Mammary epithelial cell (primary cell): ENCODE measurements at regions of chr2 and their contacts with region 1.

Region 1: GRCh38 chr2:108583903-108584520 is 49.7 kb downstream of the LIMS1 start:
- DNase-seq: peak; percentile 66
- H3K4me3 ChIP-seq: no peak overlapping the region
- H3K27ac ChIP-seq: no peak overlapping the region
- H3K4me1 ChIP-seq: peaks cover 30% of the 10 kb centered on the region
- H3K27me3 ChIP-seq: no peaks in the 10 kb centered on the region
- CTCF ChIP-seq: peak; percentile 69 to 82

Region 2: DNA sequence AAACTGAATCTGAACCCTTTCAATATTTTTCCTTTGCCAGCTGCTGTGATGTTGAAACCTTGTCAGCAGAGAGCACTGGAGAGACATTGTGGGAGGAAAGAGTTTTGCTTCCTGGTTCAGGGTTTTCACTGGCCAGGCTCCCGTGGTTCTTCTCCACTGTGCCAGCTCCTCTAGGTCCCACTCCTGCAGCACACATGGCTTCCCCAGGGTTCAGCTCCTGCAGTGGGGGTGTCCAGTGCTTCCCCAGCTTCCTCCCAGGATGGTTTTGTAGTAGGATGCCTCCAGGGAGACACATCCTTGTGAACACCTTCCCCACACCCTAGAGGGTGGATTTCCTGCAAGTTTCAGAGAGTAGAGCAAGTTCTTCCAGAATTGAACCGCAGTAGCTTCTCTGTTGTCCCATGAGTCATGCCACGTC is 368.2 kb before region 1 on chr2:
- CTCF ChIA-PET with region 1: no interaction called
- dilution Hi-C with region 1: no loop called
- in situ Hi-C with region 1: no loop called
- intact Hi-C with region 1: loop called (anchors 2 kb)
- DNase-seq: peak; percentile 64
- H3K4me3 ChIP-seq: no peak overlapping the region
- H3K27ac ChIP-seq: no peak overlapping the region
- H3K4me1 ChIP-seq: peaks cover 3% of the 10 kb centered on the region
- H3K27me3 ChIP-seq: no peaks in the 10 kb centered on the region
- CTCF ChIP-seq: peak; percentile 33 to 59

Region 3: DNA sequence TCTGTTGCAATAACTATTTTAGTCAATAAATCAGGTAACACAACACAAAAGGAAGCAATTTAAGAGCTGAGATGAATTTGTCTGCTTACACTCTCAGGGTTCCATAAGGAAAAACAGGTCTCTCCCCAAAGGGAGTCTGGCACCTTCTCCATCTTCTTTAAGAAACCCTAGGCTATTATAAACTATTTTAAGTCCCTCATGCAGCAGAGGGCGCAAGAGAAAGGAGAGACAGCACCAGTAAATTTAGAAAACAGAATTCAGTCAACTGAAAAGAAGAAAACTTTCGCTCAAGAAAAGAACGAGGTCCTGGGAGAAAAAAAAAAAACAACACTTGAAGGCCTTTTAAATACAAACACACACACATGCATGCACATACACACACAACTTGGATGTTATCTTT is 187.2 kb before region 1 on chr2:
- CTCF ChIA-PET with region 1: no interaction called
- dilution Hi-C with region 1: no loop called
- in situ Hi-C with region 1: loop called in 1 of 2 experiments (anchors 10 kb)
- intact Hi-C with region 1: loop called (anchors 1 kb)
- DNase-seq: peak; percentile 39
- H3K4me3 ChIP-seq: no peak overlapping the region
- H3K27ac ChIP-seq: no peak overlapping the region
- H3K4me1 ChIP-seq: no peaks in the 10 kb centered on the region
- H3K27me3 ChIP-seq: no peaks in the 10 kb centered on the region
- CTCF ChIP-seq: peak; percentile 28 to 59

Region 4: DNA sequence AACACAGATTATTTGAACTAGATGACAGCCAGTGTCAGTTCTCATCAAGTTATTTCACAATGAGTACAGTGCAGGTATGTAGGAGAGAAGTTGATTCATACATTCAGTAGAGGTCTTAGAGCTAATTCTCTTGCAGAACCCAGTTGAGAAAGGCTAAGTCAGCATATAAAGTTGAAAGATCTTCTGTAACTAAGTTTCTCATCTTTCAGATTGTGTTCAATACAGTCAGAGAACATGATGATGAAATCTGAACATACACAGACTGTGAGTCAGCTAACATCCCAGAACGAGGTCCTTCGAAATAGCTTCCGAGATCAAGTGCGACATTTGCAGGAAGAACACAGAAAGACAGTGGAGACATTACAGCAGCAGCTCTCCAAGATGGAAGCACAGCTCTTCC is 91.6 kb before region 1 on chr2:
- CTCF ChIA-PET with region 1: interaction called, 3 read pairs
- dilution Hi-C with region 1: no loop called
- in situ Hi-C with region 1: no loop called
- intact Hi-C with region 1: loop called (anchors 2 kb)
- DNase-seq: peak; percentile 88
- H3K4me3 ChIP-seq: no peak overlapping the region
- H3K27ac ChIP-seq: no peak overlapping the region
- H3K4me1 ChIP-seq: peaks cover 8% of the 10 kb centered on the region
- H3K27me3 ChIP-seq: no peaks in the 10 kb centered on the region
- CTCF ChIP-seq: no peak

Region 5: GRCh38 chr2:108548208-108549003 is 35.6 kb before region 1 on chr2:
- CTCF ChIA-PET with region 1: interaction called, 17 read pairs
- dilution Hi-C with region 1: no loop called
- in situ Hi-C with region 1: no loop called
- intact Hi-C with region 1: no loop called
- DNase-seq: no peak
- H3K4me3 ChIP-seq: no peak overlapping the region
- H3K27ac ChIP-seq: no peak overlapping the region
- H3K4me1 ChIP-seq: no peaks in the 10 kb centered on the region
- H3K27me3 ChIP-seq: no peaks in the 10 kb centered on the region
- CTCF ChIP-seq: no peak

Region 6: DNA sequence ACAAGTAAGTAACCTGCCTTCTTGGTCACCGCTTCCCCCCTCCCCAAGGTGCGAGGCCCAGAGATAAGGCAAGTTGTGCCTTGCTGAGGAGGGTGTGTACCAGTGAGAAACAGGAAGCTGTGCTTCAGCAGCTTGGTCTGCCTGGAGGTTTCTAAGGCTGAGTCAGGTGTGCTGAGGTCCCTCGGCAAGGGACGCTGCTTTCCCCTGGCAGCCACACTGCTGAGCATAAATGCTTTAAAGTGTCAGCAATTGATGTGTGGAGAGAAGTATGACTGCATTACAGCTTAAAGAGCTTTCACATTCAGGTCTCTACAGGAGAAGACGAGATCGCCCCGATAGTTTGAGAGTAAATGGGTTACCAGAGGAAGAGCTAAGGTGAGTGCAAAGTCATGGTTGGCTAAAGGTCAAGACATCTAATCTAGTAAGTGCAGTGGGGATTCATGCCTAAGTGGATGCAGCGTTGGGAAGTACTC is 37.1 kb after region 1 on chr2:
- CTCF ChIA-PET with region 1: no interaction called
- dilution Hi-C with region 1: no loop called
- in situ Hi-C with region 1: no loop called
- intact Hi-C with region 1: no loop called
- DNase-seq: peak; percentile 85
- H3K4me3 ChIP-seq: peak overlapping the region; percentile 34 to 50 (median 37)
- H3K27ac ChIP-seq: peak overlapping the region; percentile 80
- H3K4me1 ChIP-seq: peaks cover 37% of the 10 kb centered on the region
- H3K27me3 ChIP-seq: no peaks in the 10 kb centered on the region
- CTCF ChIP-seq: no peak

Region 7: DNA sequence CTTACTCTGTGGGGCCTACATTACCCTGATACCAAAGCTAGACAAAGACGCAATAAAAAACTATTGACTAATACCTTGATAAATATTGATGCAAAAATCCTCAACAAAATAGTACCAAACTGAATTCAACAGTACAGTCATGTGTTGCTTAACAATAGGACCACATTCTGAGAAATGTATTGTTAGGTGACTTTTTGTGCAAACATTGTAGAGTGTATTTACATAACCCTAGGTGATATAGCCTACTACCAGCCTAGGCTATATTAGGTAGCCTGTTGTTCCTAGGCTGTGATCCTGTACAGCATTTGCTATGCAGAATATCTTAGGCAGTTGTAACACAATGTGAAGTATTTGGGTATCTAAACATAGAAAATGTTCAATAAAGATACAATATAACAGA is 239.3 kb after region 1 on chr2:
- CTCF ChIA-PET with region 1: no interaction called
- dilution Hi-C with region 1: no loop called
- in situ Hi-C with region 1: no loop called
- intact Hi-C with region 1: no loop called
- DNase-seq: no peak
- H3K4me3 ChIP-seq: no peak overlapping the region
- H3K27ac ChIP-seq: no peak overlapping the region
- H3K4me1 ChIP-seq: no peaks in the 10 kb centered on the region
- H3K27me3 ChIP-seq: no peaks in the 10 kb centered on the region
- CTCF ChIP-seq: no peak